ENCODE measurements at regions of chr19 and their contacts with region 1.

Region 1: DNA sequence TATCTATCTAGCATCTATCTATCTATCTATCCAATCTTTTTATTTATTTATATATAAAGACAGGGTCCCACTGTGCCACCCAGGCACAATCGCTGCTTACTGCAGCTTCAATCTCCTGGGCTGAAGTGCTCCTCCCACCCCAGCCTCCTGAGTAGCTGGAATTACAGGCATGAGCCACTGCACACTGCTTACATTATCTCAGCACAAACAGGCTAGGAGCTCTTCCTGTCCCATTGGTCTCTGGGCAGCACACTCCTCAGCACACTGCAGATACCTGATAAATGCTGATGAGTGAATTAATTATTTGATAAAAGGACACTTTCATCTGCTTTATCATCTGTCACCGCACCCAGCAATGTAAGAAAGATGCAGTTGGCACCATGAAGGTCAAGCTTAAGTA is 16.1 kb downstream of the ZNF562 start:
- DNase-seq: peak; percentile 16
- ATAC-seq: peak; percentile 85
- H3K4me3 ChIP-seq: no peak overlapping the region
- H3K27ac ChIP-seq: no peak overlapping the region
- H3K4me1 ChIP-seq: peaks cover 2% of the 10 kb centered on the region; the same call in 1 of the 2 replicates
- H3K27me3 ChIP-seq: no peaks in the 10 kb centered on the region
- CTCF ChIP-seq: no peak
- POLR2A ChIP-seq: no peak
- RAD21 ChIP-seq: no peak

Region 2: DNA sequence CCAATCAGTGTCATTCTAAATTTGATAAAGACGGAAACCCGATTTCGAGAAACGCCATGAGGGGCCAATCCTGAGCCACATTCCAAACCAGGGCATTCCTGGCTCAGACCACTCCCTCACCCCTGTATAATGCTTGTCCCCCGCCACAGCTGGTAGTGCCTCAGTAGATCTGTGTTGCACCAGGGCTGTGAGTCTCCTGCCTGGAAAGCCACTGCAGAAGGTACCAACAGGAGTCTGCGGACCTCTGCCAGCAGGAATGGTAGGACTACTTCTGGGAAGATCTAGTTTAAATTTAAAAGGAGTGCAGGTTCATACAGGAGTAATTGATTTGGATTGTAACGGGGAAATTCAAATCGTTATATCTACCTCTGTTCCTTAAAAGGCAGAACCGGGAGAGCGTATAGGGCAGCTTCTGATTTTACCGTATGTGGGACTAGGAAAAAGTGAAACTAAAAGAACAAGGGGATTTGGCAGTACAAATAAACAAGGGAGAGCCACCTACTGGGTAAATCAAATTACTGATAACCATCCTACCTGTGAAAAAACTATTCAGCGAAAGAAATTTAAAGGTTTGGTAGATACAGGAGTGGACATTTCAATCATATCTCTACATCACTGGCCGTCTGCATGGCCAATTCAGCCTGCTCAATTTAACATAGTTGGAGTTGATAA is 202.6 kb before region 1 on chr19:
- CTCF ChIA-PET with region 1: no interaction called
- POLR2A ChIA-PET with region 1: interaction called, 11 read pairs
- dilution Hi-C with region 1: no loop called
- in situ Hi-C with region 1: no loop called
- intact Hi-C with region 1: no loop called
- DNase-seq: no peak
- ATAC-seq: no peak
- H3K4me3 ChIP-seq: no peak overlapping the region
- H3K27ac ChIP-seq: no peak overlapping the region
- H3K4me1 ChIP-seq: no peaks in the 10 kb centered on the region
- H3K27me3 ChIP-seq: no peaks in the 10 kb centered on the region
- CTCF ChIP-seq: no peak
- POLR2A ChIP-seq: no peak
- RAD21 ChIP-seq: no peak

Region 3: GRCh38 chr19:9538183-9539058 is 120.3 kb before region 1 on chr19 and contains the start of gene ZNF426:
- CTCF ChIA-PET with region 1: no interaction called
- POLR2A ChIA-PET with region 1: no interaction called
- dilution Hi-C with region 1: no loop called
- in situ Hi-C with region 1: no loop called
- intact Hi-C with region 1: no loop called
- DNase-seq: peak; percentile 91
- ATAC-seq: peak; percentile 97
- H3K4me3 ChIP-seq: peak within 1 kb of the TSS; percentile 93
- H3K27ac ChIP-seq: peak within 1 kb of the TSS; percentile 98
- H3K4me1 ChIP-seq: no peaks in the 10 kb centered on the region
- H3K27me3 ChIP-seq: no peaks in the 10 kb centered on the region
- CTCF ChIP-seq: no peak
- POLR2A ChIP-seq: peak; percentile 84
- RAD21 ChIP-seq: 0 out of 2 replicates have a peak, but pooled peaks have one; percentile 4
- total RNA-seq, gene ZNF426: 25.0 and 30.1 TPM in 2 replicates

Region 4: DNA sequence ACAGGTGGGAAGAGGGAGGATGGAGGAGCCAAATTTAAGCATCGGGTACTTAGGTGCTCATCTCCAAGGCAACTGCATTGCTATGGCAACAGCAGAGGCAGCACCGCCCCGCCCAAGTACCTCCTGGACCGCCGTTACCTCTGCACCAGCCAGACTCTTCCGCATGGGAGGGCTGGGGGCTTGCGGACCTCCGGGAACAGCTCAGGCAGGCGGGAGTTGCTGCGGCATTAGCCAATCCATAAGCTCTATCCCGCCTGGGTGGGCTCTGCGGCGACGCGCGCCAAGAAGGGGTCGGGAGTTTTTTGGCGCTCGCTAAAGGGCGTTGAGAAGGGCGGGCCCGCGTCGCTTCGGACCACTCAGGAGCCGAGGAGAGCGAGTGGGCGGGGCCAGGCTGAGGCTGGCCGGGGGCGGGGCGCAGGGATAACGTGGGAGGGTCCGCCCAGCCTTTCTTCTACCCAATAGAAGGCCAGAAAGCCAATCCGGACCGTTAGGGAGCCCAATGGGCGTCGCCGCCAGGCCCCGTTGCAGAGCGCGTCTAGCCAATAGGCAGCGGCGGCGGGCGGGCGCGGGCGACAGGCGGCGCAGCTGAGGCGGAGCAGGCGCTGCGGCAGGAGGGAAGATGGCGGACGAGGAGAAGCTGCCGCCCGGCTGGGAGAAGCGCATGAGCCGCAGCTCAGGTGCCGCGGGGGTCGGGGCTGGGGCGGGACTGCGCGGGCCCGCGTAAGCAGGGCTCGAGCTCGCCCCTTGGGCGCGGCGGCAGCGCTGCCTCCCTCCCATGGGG is 176.1 kb after region 1 on chr19 and contains the start of gene PIN1:
- CTCF ChIA-PET with region 1: no interaction called
- POLR2A ChIA-PET with region 1: interaction called, 17 read pairs
- dilution Hi-C with region 1: no loop called
- in situ Hi-C with region 1: no loop called
- intact Hi-C with region 1: no loop called
- DNase-seq: peak; percentile 97
- ATAC-seq: peak; percentile 98
- H3K4me3 ChIP-seq: peak within 1 kb of the TSS; percentile 88
- H3K27ac ChIP-seq: peak within 1 kb of the TSS; percentile 44; the same call in 1 of the 2 replicates
- H3K4me1 ChIP-seq: no peaks in the 10 kb centered on the region; the same call in 1 of the 2 replicates
- H3K27me3 ChIP-seq: no peaks in the 10 kb centered on the region
- CTCF ChIP-seq: peak; percentile 82
- POLR2A ChIP-seq: peak; percentile 46; the same call in 1 of the 2 replicates
- RAD21 ChIP-seq: no peak
- total RNA-seq, gene PIN1: 76.0 and 77.2 TPM in 2 replicates